GM23248 (cell line): ENCODE measurements at regions of chr5 and their contacts with region 1.

Region 1: GRCh38 chr5:149828161-149828884 is 98.2 kb downstream of the PPARGC1B start:
- DNase-seq: peak; percentile 91
- H3K4me3 ChIP-seq: no peak overlapping the region
- H3K27ac ChIP-seq: no peak overlapping the region
- H3K4me1 ChIP-seq: peaks cover 4% of the 10 kb centered on the region; the same call in 1 of the 2 replicates
- H3K27me3 ChIP-seq: no peaks in the 10 kb centered on the region

Region 2: DNA sequence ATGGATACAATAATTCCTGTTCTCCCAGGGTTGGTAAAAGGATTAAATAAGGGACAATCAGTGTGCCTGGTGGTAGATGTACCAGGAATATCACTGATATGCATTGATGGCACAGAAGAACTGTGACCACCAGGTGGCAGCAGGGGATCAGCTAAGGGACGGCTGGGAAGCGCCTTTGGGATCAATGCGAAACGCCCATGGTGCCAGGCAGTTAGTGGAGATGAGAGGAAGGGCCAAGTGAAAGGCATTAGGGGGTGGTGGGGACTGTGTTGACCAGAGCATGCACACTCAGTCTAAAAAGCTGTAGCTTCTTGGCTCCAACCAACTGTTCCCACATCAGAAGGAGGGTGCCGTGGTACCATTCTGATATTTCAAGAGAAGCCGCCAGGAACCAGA is 191.5 kb before region 1 on chr5:
- in situ Hi-C with region 1: loop called (anchors 5 kb)
- DNase-seq: peak; percentile 90
- H3K4me3 ChIP-seq: no peak overlapping the region
- H3K27ac ChIP-seq: no peak overlapping the region
- H3K4me1 ChIP-seq: peaks cover 10% of the 10 kb centered on the region
- H3K27me3 ChIP-seq: no peaks in the 10 kb centered on the region

Region 3: DNA sequence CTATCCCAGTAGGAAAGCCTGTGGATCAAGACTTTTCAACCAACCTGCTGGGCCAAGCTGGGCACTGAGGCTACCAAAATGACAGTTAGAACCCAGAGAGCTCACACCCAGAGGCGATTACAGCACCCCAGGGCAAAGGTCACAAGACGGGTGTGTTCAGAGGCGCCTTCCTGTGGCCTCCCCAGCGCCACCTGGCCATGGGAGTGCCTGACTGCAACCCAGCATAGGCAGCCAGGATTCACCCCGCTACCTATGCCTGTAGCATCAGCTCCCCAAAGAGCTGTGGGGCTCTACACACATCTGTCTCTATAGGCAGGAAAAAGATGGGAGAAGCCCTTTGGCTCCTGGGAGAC is 293.8 kb after region 1 on chr5:
- in situ Hi-C with region 1: loop called (anchors 25 kb)
- DNase-seq: peak; percentile 49
- H3K4me3 ChIP-seq: no peak overlapping the region
- H3K27ac ChIP-seq: no peak overlapping the region
- H3K4me1 ChIP-seq: peaks cover 4% of the 10 kb centered on the region
- H3K27me3 ChIP-seq: no peaks in the 10 kb centered on the region

Region 4: GRCh38 chr5:150217873-150218692 is 389.8 kb after region 1 on chr5:
- in situ Hi-C with region 1: loop called (anchors 25 kb)
- DNase-seq: peak; percentile 84
- H3K4me3 ChIP-seq: no peak overlapping the region
- H3K27ac ChIP-seq: no peak overlapping the region
- H3K4me1 ChIP-seq: peaks cover 12% of the 10 kb centered on the region
- H3K27me3 ChIP-seq: no peaks in the 10 kb centered on the region

Region 5: GRCh38 chr5:150449517-150450339 is 621.4 kb after region 1 on chr5 and contains the start of gene RPS14:
- in situ Hi-C with region 1: loop called (anchors 25 kb)
- DNase-seq: peak; percentile 97
- H3K4me3 ChIP-seq: peak within 1 kb of the TSS; percentile 84
- H3K27ac ChIP-seq: peak within 1 kb of the TSS; percentile 96
- H3K4me1 ChIP-seq: peaks cover 9% of the 10 kb centered on the region
- H3K27me3 ChIP-seq: no peaks in the 10 kb centered on the region
- total RNA-seq, gene RPS14: 1,694 and 1,749 TPM in 2 replicates

Region 6: GRCh38 chr5:150689120-150689519 is 860.8 kb after region 1 on chr5:
- in situ Hi-C with region 1: no loop called
- DNase-seq: no peak
- H3K4me3 ChIP-seq: no peak overlapping the region
- H3K27ac ChIP-seq: no peak overlapping the region
- H3K4me1 ChIP-seq: no peaks in the 10 kb centered on the region
- H3K27me3 ChIP-seq: no peaks in the 10 kb centered on the region